MCF 10A (cell line): ENCODE measurements at regions of chr18 and their contacts with region 1.

Region 1: DNA sequence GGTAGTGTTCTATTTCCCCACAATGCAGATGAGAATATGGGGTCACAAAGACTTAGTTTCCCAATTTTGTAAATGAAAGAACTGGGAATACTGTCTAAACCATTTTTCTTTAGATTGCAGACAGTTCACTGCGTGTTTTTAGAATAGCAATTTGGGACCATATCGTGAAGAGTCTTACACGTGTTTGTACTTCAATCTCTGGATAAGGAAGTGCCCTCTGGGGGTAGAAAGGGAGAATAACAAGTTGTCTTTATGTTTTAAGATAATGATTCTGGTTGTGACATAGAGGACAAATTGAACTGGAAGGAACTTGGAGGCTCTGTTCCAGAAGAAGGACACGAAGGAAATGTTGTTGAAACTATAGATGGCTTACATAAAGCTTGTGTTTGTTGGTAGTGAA is 457.7 kb downstream of the CBLN2 start:
- DNase-seq: peak; percentile 52
- H3K4me3 Mint-ChIP-seq: no peak overlapping the region
- H3K27ac Mint-ChIP-seq: no peak overlapping the region
- H3K4me1 Mint-ChIP-seq: no peaks in the 10 kb centered on the region
- H3K27me3 Mint-ChIP-seq: no peaks in the 10 kb centered on the region
- CTCF ChIP-seq: peak; percentile 34

Region 2: DNA sequence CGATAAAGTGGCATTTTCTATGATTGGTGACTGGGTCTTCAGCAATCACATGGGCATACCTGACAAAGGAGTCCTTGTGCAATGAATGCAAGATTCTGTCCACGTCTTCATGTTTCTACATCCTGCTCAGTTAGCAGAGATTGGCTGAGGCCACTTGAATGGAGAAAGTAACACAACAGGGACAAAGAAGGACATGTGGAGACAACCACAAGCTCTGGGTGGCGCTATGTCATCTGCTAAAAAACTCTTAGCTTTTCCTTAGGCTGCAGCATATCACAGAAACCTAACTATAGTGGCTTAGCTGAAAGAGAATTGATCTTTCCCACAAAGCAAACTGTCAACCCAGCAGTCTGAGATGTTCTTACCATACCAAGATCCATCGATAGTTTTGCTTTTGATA is 687.9 kb before region 1 on chr18:
- CTCF ChIA-PET with region 1: no interaction called
- POLR2A ChIA-PET with region 1: no interaction called
- intact Hi-C with region 1: loop called (anchors 1 kb)
- DNase-seq: peak; percentile 45
- H3K4me3 Mint-ChIP-seq: no peak overlapping the region
- H3K27ac Mint-ChIP-seq: no peak overlapping the region
- H3K4me1 Mint-ChIP-seq: no peaks in the 10 kb centered on the region
- H3K27me3 Mint-ChIP-seq: no peaks in the 10 kb centered on the region
- CTCF ChIP-seq: peak; percentile 41

Region 3: GRCh38 chr18:72160510-72161445 is 74.4 kb after region 1 on chr18:
- CTCF ChIA-PET with region 1: no interaction called
- POLR2A ChIA-PET with region 1: no interaction called
- intact Hi-C with region 1: no loop called
- DNase-seq: peak; percentile 17
- H3K4me3 Mint-ChIP-seq: peak overlapping the region; percentile 42
- H3K27ac Mint-ChIP-seq: peak overlapping the region; percentile 77
- H3K4me1 Mint-ChIP-seq: no peaks in the 10 kb centered on the region
- H3K27me3 Mint-ChIP-seq: peaks cover 19% of the 10 kb centered on the region
- CTCF ChIP-seq: no peak

Region 4: DNA sequence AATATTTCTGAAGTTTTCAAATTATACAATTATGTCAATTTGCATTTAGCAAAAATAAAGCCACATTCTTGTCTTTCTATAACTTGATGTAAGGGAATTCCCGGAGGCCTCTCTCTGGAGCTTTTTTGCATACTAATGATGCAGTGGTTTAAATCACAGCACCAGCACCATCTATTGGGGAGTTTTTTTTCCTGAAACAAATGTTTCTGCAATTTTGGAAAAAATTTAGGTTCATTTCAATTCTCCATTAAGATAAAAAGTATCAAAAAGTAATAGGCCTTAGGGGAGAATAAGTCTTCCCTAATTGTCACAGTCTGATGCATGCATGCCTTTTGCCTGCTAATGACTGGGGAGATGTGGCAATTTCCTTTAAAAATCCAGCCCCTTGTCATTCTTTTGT is 444.2 kb after region 1 on chr18:
- CTCF ChIA-PET with region 1: no interaction called
- POLR2A ChIA-PET with region 1: no interaction called
- intact Hi-C with region 1: loop called (anchors 10 kb)
- DNase-seq: peak; percentile 10
- H3K4me3 Mint-ChIP-seq: no peak overlapping the region
- H3K27ac Mint-ChIP-seq: no peak overlapping the region
- H3K4me1 Mint-ChIP-seq: no peaks in the 10 kb centered on the region
- H3K27me3 Mint-ChIP-seq: no peaks in the 10 kb centered on the region
- CTCF ChIP-seq: peak; percentile 36